Cardiac septum (tissue), 1 donor: ENCODE measurements at regions of chr3 and their contacts with region 1.

Region 1: DNA sequence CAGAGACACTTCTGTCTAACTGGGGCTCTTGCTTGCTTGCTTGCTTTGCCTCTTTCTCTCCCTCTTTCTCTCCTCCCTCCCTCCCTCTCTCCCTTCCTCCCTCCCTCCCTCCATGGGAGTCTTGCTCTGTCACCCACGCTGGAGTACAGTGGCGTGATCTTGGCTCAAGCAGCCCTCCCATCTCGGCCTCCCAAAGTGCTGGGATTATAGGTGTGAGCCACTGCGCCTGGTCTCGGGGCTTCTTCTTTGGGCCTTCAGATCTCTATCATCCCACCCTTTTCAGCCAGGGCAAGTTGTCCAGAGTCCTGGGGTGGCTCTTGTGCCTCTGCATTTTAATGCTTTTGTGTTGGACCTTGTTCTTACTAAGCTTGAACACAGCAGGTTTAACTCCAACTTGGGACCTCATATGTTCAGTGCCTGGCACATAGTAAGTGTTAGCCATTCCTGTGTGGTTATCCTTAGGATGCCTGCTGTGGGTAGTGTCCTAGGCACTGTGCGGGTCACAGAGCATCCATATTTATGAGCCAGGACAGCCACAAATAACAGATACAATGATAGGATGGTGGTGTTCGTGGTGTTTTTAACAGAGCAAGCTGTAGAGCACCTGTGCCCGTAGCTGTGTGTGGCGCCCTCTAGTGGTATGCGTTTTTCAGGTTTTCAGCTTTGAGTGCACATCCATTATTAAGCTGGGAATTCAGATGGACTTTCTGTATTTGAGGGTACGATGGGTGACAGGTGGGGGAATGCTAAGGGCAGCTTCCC is 75.1 kb downstream of the CCK start:
- DNase-seq: peak; percentile 75

Region 2: DNA sequence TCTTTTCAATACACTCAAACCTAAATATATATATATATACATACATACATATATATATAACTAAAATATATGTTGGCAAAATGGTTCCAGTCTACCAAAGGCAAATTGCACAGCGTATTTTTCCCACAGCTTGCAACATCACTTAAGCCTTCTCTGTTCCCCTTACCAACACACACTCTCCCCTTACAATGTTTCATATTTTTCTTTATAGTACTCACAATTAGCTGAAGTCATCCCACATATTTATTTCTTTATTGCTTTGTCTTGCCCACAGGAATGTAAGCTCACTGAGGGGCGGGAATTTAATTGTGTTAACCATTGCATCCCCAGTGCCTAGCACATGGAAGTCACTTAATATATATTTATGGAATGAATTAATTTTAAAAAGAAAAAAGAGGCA is 517.2 kb before region 1 on chr3:
- intact Hi-C with region 1: no loop called
- DNase-seq: no peak

Region 3: GRCh38 chr3:42101048-42101447 is 89.8 kb before region 1 on chr3:
- intact Hi-C with region 1: loop called (anchors 5 kb)
- DNase-seq: no peak

Region 4: DNA sequence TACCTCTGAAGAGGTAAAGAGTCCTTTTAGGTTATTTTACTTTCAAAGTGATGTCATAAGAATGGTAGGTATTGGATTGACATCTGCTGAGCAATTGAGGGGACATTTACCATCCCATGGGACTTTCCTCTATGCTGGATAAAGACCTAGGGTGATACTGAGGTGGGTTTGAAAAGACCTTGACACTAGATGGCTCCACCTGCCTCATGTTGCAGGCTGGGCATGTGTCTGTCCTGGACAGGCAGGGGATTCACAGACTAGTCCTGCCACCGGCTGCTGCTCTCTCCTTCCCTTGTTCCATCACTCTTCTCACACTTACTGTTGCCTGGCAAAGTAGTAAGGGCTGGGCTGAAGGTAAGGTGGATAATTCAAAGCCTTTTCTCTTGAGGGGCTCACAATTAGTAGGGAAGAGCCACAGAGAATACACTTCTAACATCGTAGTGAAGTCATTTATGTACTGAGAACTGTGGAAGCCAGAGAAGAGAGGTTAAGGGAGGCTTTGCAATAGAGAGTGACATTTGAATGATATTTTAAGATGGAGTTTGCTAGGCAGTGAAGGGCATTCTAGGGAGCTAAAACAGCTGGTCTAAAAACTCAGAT is 72.0 kb before region 1 on chr3:
- intact Hi-C with region 1: loop called (anchors 1 kb)
- DNase-seq: no peak

Region 5: DNA sequence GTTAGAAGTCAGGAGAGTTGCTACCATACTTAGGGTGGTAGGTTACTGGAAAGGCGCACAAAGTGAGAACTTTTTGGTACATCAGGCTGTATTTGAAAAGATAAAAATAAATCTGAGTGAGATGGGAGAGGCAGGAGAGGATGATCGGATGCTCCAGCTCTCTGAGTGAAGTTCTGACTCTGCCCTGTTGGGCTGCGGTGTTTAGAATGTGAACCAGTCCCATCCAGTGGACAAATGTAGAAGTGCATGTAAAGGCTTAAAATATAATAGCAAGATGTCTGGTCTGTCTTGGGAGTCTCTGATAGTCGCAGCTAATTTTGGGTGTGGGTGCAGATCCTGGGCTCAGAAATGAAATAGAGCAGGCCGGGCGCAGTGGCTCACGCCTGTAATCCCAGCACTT is 648.7 kb after region 1 on chr3:
- intact Hi-C with region 1: no loop called
- DNase-seq: no peak